ENCODE measurements at regions of chr2 and their contacts with region 1.

Region 1: DNA sequence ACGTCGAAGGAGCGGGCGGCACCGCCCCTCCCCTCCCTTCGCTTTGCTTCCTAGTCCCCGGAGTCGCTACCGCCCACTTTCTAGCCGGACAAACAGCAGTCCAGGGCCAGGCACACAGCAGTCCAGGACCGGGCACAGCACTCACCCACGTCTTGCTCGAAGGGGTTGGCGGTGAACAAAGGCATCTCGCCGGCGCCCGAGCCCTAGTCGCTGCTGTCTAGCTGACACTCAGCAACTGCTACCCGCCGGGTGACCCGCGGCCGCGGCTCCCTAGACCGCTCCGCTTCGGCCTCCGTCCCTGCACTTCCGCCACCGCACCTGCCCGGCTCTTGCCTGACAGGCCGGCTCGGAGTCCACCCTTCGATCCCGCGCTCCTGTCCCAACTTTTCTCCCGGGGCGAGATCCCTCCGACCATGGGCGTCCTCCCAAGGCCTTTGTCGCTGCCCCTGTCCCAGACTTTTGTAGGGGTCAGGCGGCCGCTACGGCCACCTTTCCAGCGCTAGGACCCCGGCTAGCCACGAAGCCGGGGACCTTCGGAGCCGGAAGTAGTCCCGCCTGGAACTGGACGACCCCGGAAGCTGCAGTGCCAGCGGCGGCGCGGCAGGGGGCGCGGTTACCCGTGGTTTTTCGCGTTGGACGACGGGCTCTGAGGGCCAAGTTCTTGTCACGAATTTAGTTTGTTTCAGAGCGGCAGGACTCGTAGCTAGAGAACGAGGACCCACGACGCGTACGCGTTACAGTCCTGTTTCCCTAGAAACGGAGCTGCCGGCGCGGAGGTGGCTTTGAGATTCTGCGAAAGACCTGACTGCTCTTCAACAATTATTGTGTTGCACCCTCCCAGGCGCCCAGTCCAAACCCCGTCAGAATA is at the start of gene STAM2:
- DNase-seq: peak; percentile 72
- ATAC-seq: peak; percentile 85
- H3K4me3 ChIP-seq: peak within 1 kb of the TSS; percentile 80
- H3K27ac ChIP-seq: peak within 1 kb of the TSS; percentile 99
- H3K4me1 ChIP-seq: peaks cover 8% of the 10 kb centered on the region; the same call in 1 of the 2 replicates
- H3K27me3 ChIP-seq: no peaks in the 10 kb centered on the region
- CTCF ChIP-seq: peak; percentile 96 to 99 (median 98); a peak in 5 of 6 replicates
- EP300 ChIP-seq: no peak; a peak in 1 of 4 replicates
- POLR2A ChIP-seq: peak; percentile 93
- RAD21 ChIP-seq: peak; percentile 84
- polyA plus RNA-seq, gene STAM2: 4.4 to 7.8 TPM

Region 2: GRCh38 chr2:152047819-152048471 is 127.7 kb before region 1 on chr2:
- CTCF ChIA-PET with region 1: interaction called, 9 read pairs
- POLR2A ChIA-PET with region 1: interaction called, 6 read pairs
- RAD21 ChIA-PET with region 1: interaction called, 9 read pairs
- SMC1A ChIA-PET with region 1: interaction called, 21 read pairs
- in situ Hi-C with region 1: no loop called
- intact Hi-C with region 1: no loop called
- DNase-seq: no peak
- ATAC-seq: peak; percentile 55
- H3K4me3 ChIP-seq: no peak overlapping the region
- H3K27ac ChIP-seq: peak overlapping the region; percentile 96
- H3K4me1 ChIP-seq: peaks cover 64% of the 10 kb centered on the region
- H3K27me3 ChIP-seq: no peaks in the 10 kb centered on the region
- CTCF ChIP-seq: peak; percentile 15 to 57 (median 46); a peak in 3 of 6 replicates
- EP300 ChIP-seq: no peak
- POLR2A ChIP-seq: no peak
- RAD21 ChIP-seq: peak; percentile 31

Region 3: GRCh38 chr2:152189622-152190495 is 14.2 kb after region 1 on chr2:
- CTCF ChIA-PET with region 1: interaction called, 13 read pairs
- POLR2A ChIA-PET with region 1: no interaction called
- RAD21 ChIA-PET with region 1: interaction called, 4 read pairs
- SMC1A ChIA-PET with region 1: interaction called, 4 read pairs
- in situ Hi-C with region 1: no loop called
- intact Hi-C with region 1: no loop called
- DNase-seq: no peak
- ATAC-seq: peak; percentile 94
- H3K4me3 ChIP-seq: no peak overlapping the region
- H3K27ac ChIP-seq: no peak overlapping the region
- H3K4me1 ChIP-seq: no peaks in the 10 kb centered on the region
- H3K27me3 ChIP-seq: no peaks in the 10 kb centered on the region
- CTCF ChIP-seq: peak; percentile 71 to 79 (median 73)
- EP300 ChIP-seq: no peak
- POLR2A ChIP-seq: no peak
- RAD21 ChIP-seq: peak; percentile 97

Region 4: GRCh38 chr2:152558158-152558984 is 382.7 kb after region 1 on chr2:
- CTCF ChIA-PET with region 1: interaction called, 12 read pairs
- POLR2A ChIA-PET with region 1: no interaction called
- RAD21 ChIA-PET with region 1: no interaction called
- SMC1A ChIA-PET with region 1: interaction called, 5 read pairs
- in situ Hi-C with region 1: no loop called
- intact Hi-C with region 1: no loop called
- DNase-seq: no peak
- ATAC-seq: no peak
- H3K4me3 ChIP-seq: no peak overlapping the region
- H3K27ac ChIP-seq: no peak overlapping the region
- H3K4me1 ChIP-seq: no peaks in the 10 kb centered on the region
- H3K27me3 ChIP-seq: no peaks in the 10 kb centered on the region
- CTCF ChIP-seq: no peak
- EP300 ChIP-seq: no peak
- POLR2A ChIP-seq: no peak
- RAD21 ChIP-seq: no peak

Region 5: GRCh38 chr2:152627351-152627957 is 451.8 kb after region 1 on chr2:
- CTCF ChIA-PET with region 1: interaction called, 25 read pairs
- POLR2A ChIA-PET with region 1: interaction called, 4 read pairs
- RAD21 ChIA-PET with region 1: interaction called, 14 read pairs
- SMC1A ChIA-PET with region 1: interaction called, 9 read pairs
- in situ Hi-C with region 1: no loop called
- intact Hi-C with region 1: loop called (anchors 1 kb)
- DNase-seq: no peak
- ATAC-seq: peak; percentile 74
- H3K4me3 ChIP-seq: no peak overlapping the region
- H3K27ac ChIP-seq: no peak overlapping the region
- H3K4me1 ChIP-seq: no peaks in the 10 kb centered on the region
- H3K27me3 ChIP-seq: no peaks in the 10 kb centered on the region
- CTCF ChIP-seq: peak; percentile 39 to 66 (median 42); a peak in 5 of 6 replicates
- EP300 ChIP-seq: no peak
- POLR2A ChIP-seq: no peak
- RAD21 ChIP-seq: peak; percentile 85

Region 6: DNA sequence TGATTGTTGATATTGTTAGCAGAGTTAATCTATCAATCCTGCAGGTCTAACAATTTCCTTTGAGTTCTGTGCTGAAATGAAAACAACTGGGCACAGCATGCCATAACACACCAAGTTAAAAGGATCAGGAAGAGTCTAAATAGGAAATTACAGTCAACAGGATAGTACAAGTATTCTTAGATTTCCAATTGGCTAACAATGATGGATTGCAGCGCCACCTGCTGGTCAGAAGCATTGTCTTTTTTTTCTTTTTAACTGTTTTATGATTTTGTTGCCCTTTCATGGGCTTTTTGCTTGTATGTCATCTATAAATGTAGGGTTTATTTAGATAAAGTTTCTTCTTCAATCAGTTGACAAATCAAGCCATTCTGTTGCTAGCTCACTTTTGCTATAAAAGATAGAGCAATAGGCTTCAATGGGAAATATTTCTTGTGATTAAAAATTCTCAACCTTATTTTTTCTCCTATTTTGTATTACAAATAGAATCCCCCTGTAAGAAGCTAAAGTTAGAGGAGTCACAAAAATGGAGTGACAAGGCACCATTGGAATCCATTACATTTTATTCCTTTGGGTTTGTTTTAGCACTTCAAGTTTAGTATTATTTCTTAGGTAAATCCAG is 1343.7 kb after region 1 on chr2:
- CTCF ChIA-PET with region 1: no interaction called
- POLR2A ChIA-PET with region 1: no interaction called
- RAD21 ChIA-PET with region 1: no interaction called
- SMC1A ChIA-PET with region 1: no interaction called
- in situ Hi-C with region 1: loop called (anchors 25 kb)
- intact Hi-C with region 1: no loop called
- DNase-seq: peak; percentile 8
- ATAC-seq: peak; percentile 50
- H3K4me3 ChIP-seq: no peak overlapping the region
- H3K27ac ChIP-seq: no peak overlapping the region
- H3K4me1 ChIP-seq: no peaks in the 10 kb centered on the region
- H3K27me3 ChIP-seq: no peaks in the 10 kb centered on the region
- CTCF ChIP-seq: peak; percentile 59 to 70 (median 67); a peak in 5 of 6 replicates
- EP300 ChIP-seq: no peak
- POLR2A ChIP-seq: no peak
- RAD21 ChIP-seq: peak; percentile 76

Measured in GM12878 (cell line).